ENCODE measurements at regions of chr1 and their contacts with region 1.

Region 1: GRCh38 chr1:181479137-181479745 is 4.1 kb upstream of the CACNA1E start:
- DNase-seq: peak in 1 of 4 donors; percentile 78
- ATAC-seq: peak; percentile 96
- H3K4me3 ChIP-seq: no peak overlapping the region
- H3K27ac ChIP-seq: no peak overlapping the region
- H3K4me1 ChIP-seq: peaks cover 0 to 16% of the 10 kb centered on the region in 2 donors
- H3K27me3 ChIP-seq: peaks cover 28 to 75% of the 10 kb centered on the region in 2 donors
- CTCF ChIP-seq: peak; percentile 63 to 74

Region 2: DNA sequence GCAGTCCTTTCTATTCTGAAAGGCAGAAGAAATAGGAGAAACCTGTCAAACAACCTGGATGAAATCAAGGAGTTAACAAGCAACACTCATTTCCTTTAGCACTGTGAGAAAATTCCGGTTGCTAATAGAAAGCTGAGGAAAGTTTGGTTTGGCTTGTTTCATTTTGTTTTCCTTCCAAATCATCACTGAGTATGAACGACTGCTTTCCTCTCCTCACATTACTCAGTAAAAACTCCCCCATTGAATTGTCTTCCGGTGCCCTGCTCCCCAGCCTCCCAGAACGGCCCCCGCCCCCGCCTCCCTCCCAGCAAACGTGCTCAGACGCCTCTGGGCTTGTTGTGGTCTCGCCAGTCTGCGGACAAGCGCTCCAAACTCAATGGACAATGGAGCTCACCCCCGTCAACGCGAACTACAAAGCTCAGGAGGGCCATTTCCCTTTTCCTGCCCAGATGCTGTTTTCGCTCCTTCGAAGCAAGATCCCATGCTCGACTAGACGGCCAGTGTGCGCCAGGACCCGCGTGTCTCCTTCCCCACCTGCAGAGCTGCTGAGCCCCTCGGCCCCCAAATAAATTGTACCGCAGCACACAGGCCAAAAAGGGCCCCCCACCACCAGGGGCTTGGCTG is 457.3 kb before region 1 on chr1:
- intact Hi-C with region 1: no loop called
- DNase-seq: peak; percentile 43 to 85 (median 73)
- ATAC-seq: peak; percentile 71
- H3K4me3 ChIP-seq: peak overlapping the region; percentile 93 to 95
- H3K27ac ChIP-seq: peak overlapping the region; percentile 91 to 95
- H3K4me1 ChIP-seq: peaks cover 10 to 47% of the 10 kb centered on the region in 2 donors
- H3K27me3 ChIP-seq: no peaks in the 10 kb centered on the region
- CTCF ChIP-seq: no peak

Region 3: DNA sequence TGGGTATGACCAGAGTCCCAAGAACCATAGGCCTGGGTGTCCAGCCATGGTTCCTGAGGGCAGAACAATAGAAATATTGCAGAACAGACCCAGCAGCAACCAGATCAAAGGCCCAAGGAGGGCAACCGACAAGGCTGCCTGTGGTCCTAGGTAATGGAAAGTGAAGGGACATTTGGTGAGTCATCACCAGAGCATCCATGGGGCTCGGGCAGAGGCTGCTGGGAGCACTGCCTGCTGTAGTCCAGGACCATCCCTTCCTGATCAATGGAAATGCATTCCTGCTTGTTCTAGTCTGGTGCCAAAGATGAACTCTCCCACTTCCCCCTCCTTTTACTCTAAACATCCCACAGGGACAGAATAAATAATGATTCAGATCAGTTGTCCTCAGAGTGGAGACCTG is 168.7 kb before region 1 on chr1:
- intact Hi-C with region 1: no loop called
- DNase-seq: no peak
- ATAC-seq: no peak
- H3K4me3 ChIP-seq: no peak overlapping the region
- H3K27ac ChIP-seq: no peak overlapping the region
- H3K4me1 ChIP-seq: no peaks in the 10 kb centered on the region
- H3K27me3 ChIP-seq: peaks cover 13 to 44% of the 10 kb centered on the region in 2 donors
- CTCF ChIP-seq: no peak

Region 4: GRCh38 chr1:181676269-181676668 is 197.0 kb after region 1 on chr1:
- intact Hi-C with region 1: loop called in 1 of 2 experiments (anchors 10 kb)
- DNase-seq: peak in 2 of 4 donors; percentile 13 to 54
- ATAC-seq: peak; percentile 65
- H3K4me3 ChIP-seq: no peak overlapping the region
- H3K27ac ChIP-seq: no peak overlapping the region
- H3K4me1 ChIP-seq: no peaks in the 10 kb centered on the region
- H3K27me3 ChIP-seq: peaks cover 0 to 21% of the 10 kb centered on the region in 2 donors
- CTCF ChIP-seq: no peak

Region 5: DNA sequence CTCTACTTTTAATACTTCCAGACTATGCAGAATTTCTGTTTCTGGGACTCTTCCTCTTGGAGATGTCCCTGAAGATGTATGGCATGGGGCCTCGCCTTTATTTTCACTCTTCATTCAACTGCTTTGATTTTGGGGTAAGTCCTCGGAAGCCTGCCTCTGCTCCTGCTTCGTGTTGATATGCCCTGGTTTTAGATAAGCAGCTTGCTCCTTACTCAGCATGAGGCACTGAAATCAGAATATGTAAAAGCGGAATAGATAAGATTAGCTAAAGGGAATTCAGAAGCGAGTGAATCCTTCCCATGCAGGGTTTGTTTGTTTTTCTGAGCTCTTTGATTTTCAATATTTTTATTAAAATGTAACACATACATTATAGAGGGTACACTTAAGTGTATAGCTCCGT is 238.8 kb after region 1 on chr1:
- intact Hi-C with region 1: no loop called
- DNase-seq: no peak
- ATAC-seq: no peak
- H3K4me3 ChIP-seq: no peak overlapping the region
- H3K27ac ChIP-seq: no peak overlapping the region
- H3K4me1 ChIP-seq: peaks cover 0 to 3% of the 10 kb centered on the region in 2 donors
- H3K27me3 ChIP-seq: peaks cover 0 to 5% of the 10 kb centered on the region in 2 donors
- CTCF ChIP-seq: no peak

Region 6: DNA sequence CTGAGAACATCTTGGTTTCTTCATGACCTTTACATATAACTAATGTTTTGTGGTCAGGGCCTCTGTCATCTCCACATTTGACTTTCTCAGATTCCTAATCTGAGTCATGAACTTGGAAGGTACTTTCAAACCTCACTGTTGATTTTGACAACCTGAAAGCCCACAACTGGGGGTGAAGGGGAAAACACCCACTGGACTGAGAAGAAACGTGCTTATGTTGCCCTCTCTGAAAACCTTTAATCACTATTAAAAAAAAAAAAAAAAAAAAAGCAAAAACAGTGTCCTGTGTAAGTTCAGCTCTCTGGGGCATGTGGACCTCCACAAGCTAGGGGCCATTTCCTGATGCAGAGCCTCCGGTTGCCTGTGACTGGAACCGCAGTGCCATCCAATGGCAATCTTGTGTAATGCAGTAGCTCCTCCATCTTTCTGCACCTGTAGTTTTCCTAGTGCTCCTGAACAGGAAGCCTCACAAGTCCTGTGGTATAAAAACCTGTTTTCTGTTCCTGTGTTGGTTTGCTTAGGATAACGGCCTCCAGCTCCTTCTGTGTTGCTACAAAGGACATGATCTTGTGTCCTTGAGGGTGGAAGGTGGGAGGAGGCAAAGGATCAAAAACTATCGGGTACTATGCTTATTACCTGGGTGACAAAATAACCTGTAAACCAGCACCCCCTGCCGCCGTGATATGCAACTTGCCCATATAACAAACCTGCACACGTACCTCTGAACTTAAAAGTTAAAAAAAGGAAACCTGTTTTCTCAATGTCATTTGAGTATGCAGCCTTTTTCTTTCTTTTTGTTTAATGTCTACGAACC is 457.7 kb after region 1 on chr1:
- intact Hi-C with region 1: loop called in 1 of 2 experiments (anchors 10 kb)
- DNase-seq: peak in 3 of 4 donors; percentile 20 to 65 (median 42)
- ATAC-seq: peak; percentile 99
- H3K4me3 ChIP-seq: no peak overlapping the region
- H3K27ac ChIP-seq: no peak overlapping the region
- H3K4me1 ChIP-seq: no peaks in the 10 kb centered on the region
- H3K27me3 ChIP-seq: no peaks in the 10 kb centered on the region
- CTCF ChIP-seq: peak; percentile 25 to 51

Region 7: GRCh38 chr1:182337736-182338571 is 858.7 kb after region 1 on chr1:
- intact Hi-C with region 1: no loop called
- DNase-seq: no peak
- ATAC-seq: no peak
- H3K4me3 ChIP-seq: no peak overlapping the region
- H3K27ac ChIP-seq: no peak overlapping the region
- H3K4me1 ChIP-seq: no peaks in the 10 kb centered on the region
- H3K27me3 ChIP-seq: no peaks in the 10 kb centered on the region
- CTCF ChIP-seq: no peak

Measured in left lung (tissue), 14 donors.